PC-9 (cell line): ENCODE measurements at regions of chr12 and their contacts with region 1.

Region 1: DNA sequence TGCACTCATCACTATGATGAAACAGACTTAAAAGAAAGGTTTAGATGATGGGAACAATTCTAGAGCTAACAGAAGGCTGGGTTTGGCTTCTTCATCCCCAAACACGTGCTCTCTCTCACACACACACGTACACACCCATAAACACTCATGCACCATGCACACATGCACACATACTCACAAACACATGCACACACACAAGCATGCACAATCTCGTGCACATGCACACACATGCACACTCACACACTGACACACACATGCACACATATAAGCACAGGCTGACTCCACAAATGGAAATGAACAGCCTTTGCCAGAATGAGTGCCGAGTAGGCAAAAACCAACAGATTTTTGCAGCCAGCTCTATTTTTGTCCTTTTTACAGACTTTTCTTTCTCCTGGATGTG is 1571.6 kb downstream of the AACS start:
- DNase-seq: no peak
- H3K4me3 ChIP-seq: no peak overlapping the region
- H3K27ac ChIP-seq: no peak overlapping the region
- H3K4me1 ChIP-seq: no peaks in the 10 kb centered on the region
- H3K27me3 ChIP-seq: no peaks in the 10 kb centered on the region
- CTCF ChIP-seq: no peak

Region 2: DNA sequence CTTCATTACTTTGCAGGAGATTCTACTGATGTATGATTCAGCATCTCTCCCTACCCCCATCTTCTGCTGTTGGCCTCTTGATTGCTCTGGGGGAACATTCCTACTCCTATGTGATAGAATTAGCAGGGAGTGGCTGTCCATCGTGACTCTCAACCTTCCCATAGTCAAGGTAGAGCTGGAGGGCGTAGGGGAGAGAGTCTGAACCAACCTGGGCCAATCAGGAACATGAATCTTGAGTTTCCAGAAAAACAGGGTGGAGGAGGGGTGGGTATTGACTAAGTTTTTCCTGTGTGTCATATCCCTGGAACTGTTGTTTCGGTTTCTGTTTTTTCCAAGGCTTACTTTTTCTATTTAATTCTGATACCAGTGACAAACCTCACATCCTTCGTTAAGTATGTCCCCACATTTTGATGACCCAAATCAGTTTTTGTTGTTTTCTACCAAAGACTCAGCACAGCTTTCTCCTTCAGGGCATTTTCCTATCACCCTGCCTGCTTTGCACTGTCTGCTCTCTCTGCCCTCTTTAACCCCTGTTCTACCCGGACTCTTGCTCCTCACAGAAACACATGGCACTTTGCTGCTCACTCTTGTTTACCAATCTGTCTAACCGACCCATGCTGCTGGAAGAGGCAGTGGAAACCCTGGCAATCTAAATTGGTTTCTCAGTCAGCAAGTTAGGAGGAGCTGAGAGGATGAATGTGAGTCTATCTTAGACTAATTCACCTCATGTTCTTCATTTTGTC is 143.3 kb before region 1 on chr12:
- CTCF ChIA-PET with region 1: no interaction called
- POLR2A ChIA-PET with region 1: no interaction called
- intact Hi-C with region 1: no loop called
- DNase-seq: peak; percentile 78 to 82
- H3K4me3 ChIP-seq: peak overlapping the region; percentile 31; the same call in 1 of the 2 replicates
- H3K27ac ChIP-seq: peak overlapping the region; percentile 95
- H3K4me1 ChIP-seq: peaks cover 15% of the 10 kb centered on the region
- H3K27me3 ChIP-seq: no peaks in the 10 kb centered on the region
- CTCF ChIP-seq: no peak

Region 3: DNA sequence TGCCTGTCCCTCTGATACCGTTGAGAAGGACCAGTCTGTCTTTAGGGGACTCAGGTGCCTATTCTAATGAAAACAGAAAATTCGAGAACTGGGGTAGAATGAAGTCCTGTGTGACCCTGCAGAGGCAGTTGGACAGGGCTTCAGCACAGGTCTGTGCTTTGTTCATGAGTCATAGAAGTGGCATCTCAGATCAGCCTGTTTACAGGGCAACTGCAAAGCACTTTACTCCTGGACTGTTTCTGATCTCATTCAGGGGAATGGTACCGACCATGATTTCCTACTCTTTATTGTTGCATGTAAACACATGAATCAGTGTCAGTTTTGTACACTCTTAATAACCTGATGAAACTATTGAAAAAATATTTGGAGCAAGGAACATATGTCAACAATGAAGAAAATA is 54.6 kb before region 1 on chr12:
- CTCF ChIA-PET with region 1: no interaction called
- POLR2A ChIA-PET with region 1: interaction called, 13 read pairs
- intact Hi-C with region 1: no loop called
- DNase-seq: peak; percentile 45 to 48
- H3K4me3 ChIP-seq: no peak overlapping the region
- H3K27ac ChIP-seq: no peak overlapping the region
- H3K4me1 ChIP-seq: 0 out of 2 replicates have a peak, but pooled peaks cover 4% of the 10 kb centered on the region
- H3K27me3 ChIP-seq: no peaks in the 10 kb centered on the region
- CTCF ChIP-seq: no peak